HEK293T (cell line): ENCODE measurements at regions of chr6 and their contacts with region 1.

Region 1: DNA sequence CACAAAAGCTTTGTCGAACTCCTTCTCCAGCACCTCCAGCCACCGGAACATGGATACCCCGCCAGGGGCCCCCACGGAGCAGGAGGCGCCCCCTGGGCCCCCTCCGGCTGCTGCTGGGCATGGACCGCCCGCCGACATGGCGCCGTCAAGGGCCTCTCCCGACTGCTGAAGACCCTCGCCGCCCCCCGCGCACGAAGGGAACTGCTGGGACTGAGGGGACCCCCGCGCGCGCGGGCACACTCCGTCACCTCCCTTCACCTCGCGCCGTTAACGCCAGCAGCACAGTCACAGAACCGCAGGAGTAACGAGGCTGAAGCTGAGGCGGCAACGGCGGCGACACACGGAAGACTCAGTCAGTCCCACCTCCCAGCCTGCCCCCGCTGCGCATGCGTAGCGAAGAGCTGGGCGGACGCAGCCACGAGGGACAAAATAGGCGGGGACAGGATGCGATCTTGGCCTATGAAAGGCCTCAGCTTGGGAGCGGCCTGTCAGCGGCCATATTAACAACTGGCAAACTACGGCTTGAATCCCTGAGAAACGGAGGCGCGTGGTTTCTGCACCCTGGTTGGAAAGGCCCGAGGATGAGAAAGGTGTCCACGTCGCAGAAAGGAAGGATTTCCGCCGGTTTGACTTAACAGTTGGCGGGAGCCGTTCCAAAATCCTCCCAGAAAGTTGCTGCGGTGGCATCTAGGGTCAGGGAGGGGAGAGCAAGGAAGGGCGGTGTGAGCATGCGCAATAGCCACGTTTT is at the start of gene GOPC:
- DNase-seq: peak; percentile 99

Region 2: GRCh38 chr6:117449549-117450439 is 152.5 kb before region 1 on chr6:
- CTCF ChIA-PET with region 1: interaction called, 11 read pairs
- POLR2A ChIA-PET with region 1: interaction called, 5 read pairs
- DNase-seq: peak; percentile 48

Region 3: DNA sequence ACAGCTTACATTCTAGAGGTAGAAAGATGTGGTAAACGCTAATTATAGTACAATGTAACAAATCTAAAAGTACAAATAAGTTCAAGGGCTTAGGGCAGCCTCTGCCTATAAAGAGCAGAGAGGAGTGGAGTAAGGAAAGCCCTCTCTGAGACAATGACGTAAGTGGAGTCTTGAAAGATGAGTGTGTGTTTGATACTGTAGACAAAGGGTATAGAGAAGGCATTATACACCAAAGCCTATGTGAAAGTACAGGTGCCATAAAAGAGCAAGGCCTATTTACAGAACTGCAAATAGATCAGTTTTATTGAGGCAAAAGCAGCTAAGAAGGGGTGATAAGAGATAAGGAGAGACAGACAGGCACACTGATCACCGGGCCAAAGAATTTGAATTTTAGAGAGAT is 10.9 kb before region 1 on chr6:
- CTCF ChIA-PET with region 1: no interaction called
- POLR2A ChIA-PET with region 1: interaction called, 14 read pairs
- DNase-seq: no peak

Region 4: DNA sequence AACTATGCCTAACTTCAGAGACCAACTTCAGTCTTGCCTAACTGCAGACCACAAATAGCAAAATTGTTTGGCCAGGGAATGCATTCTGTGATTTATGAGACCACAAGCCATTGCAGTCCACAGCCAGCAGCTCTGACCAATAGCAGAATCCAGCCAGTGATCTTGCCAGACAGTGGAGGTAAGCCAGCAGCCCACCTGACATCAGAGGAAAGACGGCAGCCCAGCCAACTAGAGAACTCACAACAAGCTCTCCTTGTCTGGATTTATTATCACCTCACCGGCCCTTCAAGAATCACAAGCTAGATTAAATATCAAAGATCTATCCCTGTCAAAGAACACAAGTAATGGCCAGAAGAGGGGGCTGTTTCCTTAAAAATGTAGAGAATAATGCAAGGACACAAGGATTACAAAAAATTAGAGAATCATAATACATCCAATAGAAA is 238.2 kb after region 1 on chr6:
- CTCF ChIA-PET with region 1: no interaction called
- POLR2A ChIA-PET with region 1: no interaction called
- DNase-seq: peak; percentile 45